ENCODE measurements at regions of chr17 and their contacts with region 1.

Region 1: GRCh38 chr17:40068917-40069750 is 6.4 kb downstream of the THRA start:
- DNase-seq: peak; percentile 82
- ATAC-seq: peak; percentile 74
- H3K4me3 Mint-ChIP-seq: peak overlapping the region; percentile 77
- H3K27ac Mint-ChIP-seq: peak overlapping the region; percentile 90
- H3K4me1 Mint-ChIP-seq: peaks cover 47% of the 10 kb centered on the region
- H3K27me3 Mint-ChIP-seq: peaks cover 5% of the 10 kb centered on the region

Region 2: GRCh38 chr17:39999067-39999466 is 70.1 kb before region 1 on chr17:
- CTCF ChIA-PET with region 1: no interaction called
- POLR2A ChIA-PET with region 1: no interaction called
- DNase-seq: no peak
- ATAC-seq: no peak
- H3K4me3 Mint-ChIP-seq: no peak overlapping the region
- H3K27ac Mint-ChIP-seq: no peak overlapping the region
- H3K4me1 Mint-ChIP-seq: no peaks in the 10 kb centered on the region
- H3K27me3 Mint-ChIP-seq: no peaks in the 10 kb centered on the region

Region 3: DNA sequence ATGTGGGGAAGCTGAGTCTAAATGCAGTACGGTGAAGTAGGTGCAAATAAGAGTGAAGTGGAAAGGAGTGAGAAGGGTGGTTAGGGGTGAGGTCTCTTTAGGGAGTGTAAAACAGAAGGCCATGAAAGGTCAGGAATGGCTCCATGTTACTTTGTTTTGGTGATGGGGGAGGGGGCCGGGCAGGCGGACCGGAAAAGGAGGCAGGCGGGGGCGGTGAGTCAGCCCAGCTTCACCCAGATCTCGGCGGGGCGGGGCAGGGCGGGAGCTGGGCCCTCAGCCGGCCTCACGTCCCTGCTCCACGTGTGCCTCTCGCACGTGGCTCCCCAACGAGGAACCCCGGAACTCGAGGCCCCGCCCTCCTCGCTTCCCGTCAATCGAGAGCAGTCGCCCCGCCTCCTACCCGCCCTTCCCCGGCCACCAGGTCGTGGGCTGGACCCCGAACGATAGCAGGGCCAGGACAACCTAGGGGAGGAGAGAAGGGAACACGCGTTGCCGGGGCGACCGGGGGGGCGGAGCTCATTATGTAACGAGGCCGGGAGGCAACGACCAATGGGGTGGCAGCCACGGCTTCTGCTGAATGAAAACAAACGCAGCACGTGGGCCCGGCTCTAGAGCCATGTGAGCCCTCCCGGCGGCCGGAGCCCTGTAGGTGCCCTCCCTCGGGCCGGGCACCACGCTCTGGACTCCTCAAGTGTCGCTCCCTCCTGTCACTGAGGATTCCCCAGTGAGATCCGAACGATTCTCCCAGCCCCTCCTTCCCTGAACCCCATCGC is 29.9 kb after region 1 on chr17:
- CTCF ChIA-PET with region 1: interaction called, 10 read pairs
- POLR2A ChIA-PET with region 1: interaction called, 6 read pairs
- DNase-seq: peak; percentile 97
- ATAC-seq: peak; percentile 62
- H3K4me3 Mint-ChIP-seq: peak overlapping the region; percentile 82
- H3K27ac Mint-ChIP-seq: peak overlapping the region; percentile 78
- H3K4me1 Mint-ChIP-seq: peaks cover 91% of the 10 kb centered on the region
- H3K27me3 Mint-ChIP-seq: no peaks in the 10 kb centered on the region

Measured in activated CD8-positive, alpha-beta T cell treated with anti-CD3 and anti-CD28 coated beads, Interleukin-2, amount 10 ng/mL, durations not matched to agents 7 days and 5 days (primary cell).